Activated B cell treated with CpG ODN at 0.5 μM for 24 hours (primary cell): ENCODE measurements at regions of chr1 and their contacts with region 1.

Region 1: GRCh38 chr1:181088079-181089016 is at the start of gene IER5:
- DNase-seq: peak; percentile 91
- ATAC-seq: peak; percentile 66
- H3K4me3 Mint-ChIP-seq: peak within 1 kb of the TSS; percentile 99
- H3K27ac Mint-ChIP-seq: peak within 1 kb of the TSS; percentile 98
- H3K4me1 Mint-ChIP-seq: peaks cover 58% of the 10 kb centered on the region
- H3K27me3 Mint-ChIP-seq: no peaks in the 10 kb centered on the region
- CTCF ChIP-seq: no peak
- total RNA-seq, gene IER5: 155 and 156 TPM in 2 replicates

Region 2: DNA sequence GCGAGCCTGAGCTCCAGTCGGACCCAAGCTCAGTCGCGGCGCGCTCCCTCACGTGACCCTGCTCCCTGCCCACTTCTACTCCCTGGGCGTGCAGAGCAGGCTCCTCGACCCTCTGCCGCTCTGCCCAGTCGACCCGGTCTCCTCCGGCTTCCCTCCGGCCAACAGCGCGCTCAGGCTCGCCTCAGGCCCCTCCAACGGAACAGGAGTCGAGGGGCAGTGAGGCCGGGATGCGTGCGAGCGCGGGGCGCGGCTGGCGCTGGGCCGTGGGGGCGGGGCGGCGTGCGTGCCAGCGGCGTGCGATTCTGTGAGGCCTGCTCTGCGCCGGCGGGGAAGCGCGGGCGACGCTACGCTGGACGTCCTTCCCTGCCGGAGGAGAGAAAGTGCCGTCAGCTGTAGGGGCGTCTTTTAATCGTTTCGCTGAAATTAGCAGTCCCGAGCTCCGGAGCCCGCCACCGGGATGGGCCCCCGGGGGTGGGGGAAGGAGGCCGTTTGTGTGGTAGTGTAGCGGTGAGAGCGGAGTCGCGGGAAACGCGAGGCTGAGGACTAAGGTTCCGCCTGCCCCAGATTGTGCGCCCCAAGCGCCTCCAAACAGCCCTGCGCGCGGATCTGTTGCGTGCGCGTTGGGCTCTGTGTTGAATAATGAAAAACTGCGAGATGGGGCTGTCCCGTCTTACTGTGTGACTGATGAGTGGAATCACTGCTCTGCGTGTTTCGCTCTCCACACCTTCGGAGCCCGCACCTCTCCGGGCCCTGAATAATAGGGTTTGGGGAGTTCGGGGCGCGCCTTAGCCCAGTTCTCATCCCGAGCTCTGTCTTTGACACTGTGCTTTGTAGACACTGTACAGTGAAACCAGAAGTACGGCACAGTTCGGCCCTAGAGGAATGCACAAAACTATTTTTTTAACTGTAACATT is 585.7 kb before region 1 on chr1 and contains the start of gene ACBD6:
- CTCF ChIA-PET with region 1: no interaction called
- POLR2A ChIA-PET with region 1: interaction called, 4 read pairs
- intact Hi-C with region 1: loop called (anchors 1 kb)
- DNase-seq: peak; percentile 82
- ATAC-seq: peak; percentile 83
- H3K4me3 Mint-ChIP-seq: peak within 1 kb of the TSS; percentile 96
- H3K27ac Mint-ChIP-seq: peak within 1 kb of the TSS; percentile 98
- H3K4me1 Mint-ChIP-seq: peaks cover 30% of the 10 kb centered on the region
- H3K27me3 Mint-ChIP-seq: no peaks in the 10 kb centered on the region
- CTCF ChIP-seq: no peak
- total RNA-seq, gene ACBD6: 55.4 and 61.5 TPM in 2 replicates

Region 3: DNA sequence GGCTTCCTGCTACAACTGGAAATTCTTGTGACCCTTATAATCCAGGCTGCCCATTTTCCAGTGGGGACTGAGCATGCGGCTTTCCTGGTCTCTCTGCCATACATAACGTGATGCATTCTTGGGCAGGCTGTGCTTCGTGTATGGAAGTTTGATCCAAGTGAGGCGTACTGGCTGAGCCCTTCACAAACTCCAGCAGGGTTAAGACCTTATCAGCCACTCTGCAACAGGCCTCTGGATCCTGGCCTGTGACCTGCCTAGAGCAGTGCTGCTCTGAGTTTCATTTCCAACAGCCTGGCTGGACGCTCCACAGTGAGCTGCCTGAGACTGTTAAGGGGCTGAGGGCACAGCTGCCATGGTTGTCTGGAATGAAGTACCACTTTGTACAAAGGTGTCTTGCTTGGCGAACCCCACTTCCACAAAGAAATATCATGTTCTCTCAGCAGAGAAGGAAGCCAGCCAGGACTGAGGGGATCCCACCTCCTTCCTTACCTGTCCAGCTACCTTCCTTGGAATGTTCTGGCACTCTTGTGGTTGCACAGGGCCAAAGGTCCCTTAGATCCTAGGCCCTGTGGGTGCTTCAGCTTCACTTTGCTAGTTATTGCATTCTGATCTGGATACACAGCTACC is 485.0 kb before region 1 on chr1:
- CTCF ChIA-PET with region 1: no interaction called
- POLR2A ChIA-PET with region 1: no interaction called
- intact Hi-C with region 1: no loop called
- DNase-seq: no peak
- ATAC-seq: no peak
- H3K4me3 Mint-ChIP-seq: no peak overlapping the region
- H3K27ac Mint-ChIP-seq: no peak overlapping the region
- H3K4me1 Mint-ChIP-seq: no peaks in the 10 kb centered on the region
- H3K27me3 Mint-ChIP-seq: no peaks in the 10 kb centered on the region
- CTCF ChIP-seq: no peak

Region 4: GRCh38 chr1:180881806-180882509 is 206.4 kb before region 1 on chr1:
- CTCF ChIA-PET with region 1: interaction called, 5 read pairs
- POLR2A ChIA-PET with region 1: no interaction called
- intact Hi-C with region 1: loop called (anchors 1 kb)
- DNase-seq: no peak
- ATAC-seq: no peak
- H3K4me3 Mint-ChIP-seq: no peak overlapping the region
- H3K27ac Mint-ChIP-seq: no peak overlapping the region
- H3K4me1 Mint-ChIP-seq: no peaks in the 10 kb centered on the region
- H3K27me3 Mint-ChIP-seq: no peaks in the 10 kb centered on the region
- CTCF ChIP-seq: no peak

Region 5: DNA sequence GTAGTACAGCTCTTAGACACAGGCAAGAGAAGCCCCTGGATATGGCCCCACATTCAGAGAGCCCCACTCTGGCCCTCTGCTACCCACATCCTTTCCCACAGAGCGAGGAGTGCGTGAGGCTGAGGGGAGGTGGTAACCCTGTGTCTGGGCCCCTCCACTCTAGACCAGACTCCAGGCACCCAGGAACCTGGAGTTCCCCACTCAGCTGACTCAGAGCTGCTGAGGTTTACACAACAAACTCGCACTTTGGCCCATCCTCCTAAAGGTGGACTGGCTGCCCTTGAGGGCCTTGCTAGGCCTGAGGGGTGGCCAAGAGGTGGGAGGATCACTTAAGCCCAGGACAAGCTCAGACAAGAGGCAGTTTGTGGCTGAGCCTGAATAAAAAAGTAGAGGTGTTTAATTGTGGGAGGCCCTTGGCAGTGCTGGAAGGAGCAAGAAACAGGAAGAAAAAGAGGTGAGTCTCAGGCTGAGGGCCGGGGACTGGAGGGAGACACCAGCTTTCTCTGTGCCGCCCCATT is 43.8 kb before region 1 on chr1:
- CTCF ChIA-PET with region 1: interaction called, 20 read pairs
- POLR2A ChIA-PET with region 1: interaction called, 11 read pairs
- intact Hi-C with region 1: no loop called
- DNase-seq: no peak
- ATAC-seq: peak; percentile 62
- H3K4me3 Mint-ChIP-seq: no peak overlapping the region
- H3K27ac Mint-ChIP-seq: peak overlapping the region; percentile 36
- H3K4me1 Mint-ChIP-seq: peaks cover 36% of the 10 kb centered on the region
- H3K27me3 Mint-ChIP-seq: no peaks in the 10 kb centered on the region
- CTCF ChIP-seq: no peak

Region 6: GRCh38 chr1:181105134-181106021 is 17.0 kb after region 1 on chr1:
- CTCF ChIA-PET with region 1: interaction called, 31 read pairs
- POLR2A ChIA-PET with region 1: interaction called, 428 read pairs
- intact Hi-C with region 1: loop called (anchors 1 kb)
- DNase-seq: peak; percentile 88
- ATAC-seq: peak; percentile 87
- H3K4me3 Mint-ChIP-seq: peak overlapping the region; percentile 85
- H3K27ac Mint-ChIP-seq: peak overlapping the region; percentile 89
- H3K4me1 Mint-ChIP-seq: peaks cover 40% of the 10 kb centered on the region
- H3K27me3 Mint-ChIP-seq: no peaks in the 10 kb centered on the region
- CTCF ChIP-seq: no peak

Region 7: GRCh38 chr1:181152892-181153633 is 64.7 kb after region 1 on chr1:
- CTCF ChIA-PET with region 1: interaction called, 18 read pairs
- POLR2A ChIA-PET with region 1: interaction called, 25 read pairs
- intact Hi-C with region 1: loop called (anchors 1 kb)
- DNase-seq: peak; percentile 48
- ATAC-seq: peak; percentile 86
- H3K4me3 Mint-ChIP-seq: peak overlapping the region; percentile 71
- H3K27ac Mint-ChIP-seq: peak overlapping the region; percentile 64
- H3K4me1 Mint-ChIP-seq: peaks cover 48% of the 10 kb centered on the region
- H3K27me3 Mint-ChIP-seq: no peaks in the 10 kb centered on the region
- CTCF ChIP-seq: no peak

Region 8: GRCh38 chr1:182839209-182840065 is 1751.1 kb after region 1 on chr1 and contains the start of gene DHX9:
- CTCF ChIA-PET with region 1: no interaction called
- POLR2A ChIA-PET with region 1: interaction called, 16 read pairs
- intact Hi-C with region 1: no loop called
- DNase-seq: peak; percentile 99
- ATAC-seq: peak; percentile 82
- H3K4me3 Mint-ChIP-seq: peak within 1 kb of the TSS; percentile 92
- H3K27ac Mint-ChIP-seq: peak within 1 kb of the TSS; percentile 98
- H3K4me1 Mint-ChIP-seq: peaks cover 39% of the 10 kb centered on the region
- H3K27me3 Mint-ChIP-seq: no peaks in the 10 kb centered on the region
- CTCF ChIP-seq: no peak
- total RNA-seq, gene DHX9: 265 and 266 TPM in 2 replicates